HEK293 (cell line): ENCODE measurements at regions of chr1 and their contacts with region 1.

Region 1: DNA sequence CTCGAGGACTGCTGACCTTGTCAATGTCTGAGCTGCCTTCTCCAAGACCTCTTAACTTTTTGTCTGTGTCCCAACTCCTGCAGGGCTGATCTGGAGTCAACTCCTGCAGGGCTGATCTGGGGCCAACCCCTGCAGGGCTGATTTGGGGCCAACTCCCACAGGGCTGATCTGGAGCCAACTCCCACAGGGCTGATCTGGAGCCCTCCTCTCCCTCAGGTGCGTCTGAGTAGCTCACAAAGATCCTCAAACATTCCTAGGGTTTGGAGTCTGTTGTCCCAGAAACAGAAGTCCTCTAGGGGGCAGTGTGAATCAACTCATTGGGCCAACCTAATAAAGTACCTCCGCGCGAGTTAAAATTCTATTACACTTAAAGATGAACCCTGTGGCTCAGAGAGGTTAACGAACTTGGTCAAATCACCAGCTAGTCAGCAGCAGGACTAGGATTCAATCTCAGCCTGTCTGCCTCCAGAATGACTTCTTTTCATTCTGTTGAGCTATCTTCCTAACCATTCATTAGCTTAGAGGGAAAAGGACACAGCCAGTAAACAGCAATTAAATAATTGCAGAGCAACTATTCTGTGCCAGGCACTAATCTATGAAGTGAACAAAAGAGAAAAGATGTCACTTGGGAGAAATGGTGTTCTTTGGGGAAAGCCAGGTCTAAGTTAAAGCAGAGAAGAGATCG is 17.2 kb upstream of the RLF start:
- H3K4me3 ChIP-seq: no peak overlapping the region
- H3K27ac ChIP-seq: no peak overlapping the region
- H3K4me1 ChIP-seq: no peaks in the 10 kb centered on the region
- CTCF ChIP-seq: no peak; the same call in 1 of the 2 replicates

Region 2: GRCh38 chr1:40132383-40133311 is 11.4 kb before region 1 on chr1:
- CTCF ChIA-PET with region 1: interaction called, 10 read pairs
- POLR2A ChIA-PET with region 1: no interaction called
- H3K4me3 ChIP-seq: no peak overlapping the region
- H3K27ac ChIP-seq: no peak overlapping the region
- H3K4me1 ChIP-seq: no peaks in the 10 kb centered on the region
- CTCF ChIP-seq: no peak

Region 3: DNA sequence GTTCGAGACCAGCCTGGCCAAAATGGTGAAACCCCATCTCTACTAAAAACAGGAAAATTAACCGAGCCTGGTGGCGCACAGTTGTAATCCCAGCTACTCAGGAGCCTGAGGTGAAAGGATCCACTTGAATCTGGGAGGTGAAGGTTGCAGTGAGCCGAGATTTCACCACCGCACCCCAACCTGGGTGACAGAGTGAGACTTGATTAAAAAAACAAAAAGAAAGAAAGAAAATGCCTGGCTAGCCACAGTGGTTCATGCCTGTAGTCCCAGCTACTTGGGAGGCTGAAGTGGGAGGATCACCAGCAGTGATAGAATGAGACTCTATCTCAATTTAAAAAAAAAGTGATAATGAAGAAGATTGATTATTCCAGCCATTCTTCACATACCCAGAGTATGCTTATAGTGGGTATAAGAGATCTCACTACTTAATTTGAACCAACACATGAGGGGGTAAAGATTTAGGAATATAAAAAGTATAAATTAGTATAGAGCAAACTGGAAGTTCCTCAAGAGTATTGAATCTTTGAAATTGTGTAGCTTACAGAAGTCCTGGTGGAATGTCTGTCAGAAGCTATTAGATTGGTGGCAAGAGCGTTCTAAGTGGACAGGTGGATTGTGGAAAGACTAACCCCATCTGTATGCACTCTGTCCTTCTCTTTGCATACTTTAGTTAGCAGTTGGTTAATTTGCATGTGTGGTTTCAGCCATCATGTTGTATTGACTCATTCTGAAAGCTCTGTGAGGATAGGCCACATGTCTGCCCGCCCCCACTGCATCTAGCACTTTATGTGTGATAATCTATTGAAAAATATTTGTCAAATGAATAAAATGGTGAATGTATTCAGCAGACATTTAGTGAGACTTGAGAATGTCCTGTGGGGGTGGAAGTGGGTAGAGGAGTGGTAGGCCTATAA is 42.2 kb after region 1 on chr1:
- CTCF ChIA-PET with region 1: interaction called, 49 read pairs
- POLR2A ChIA-PET with region 1: no interaction called
- H3K4me3 ChIP-seq: no peak overlapping the region
- H3K27ac ChIP-seq: no peak overlapping the region
- H3K4me1 ChIP-seq: no peaks in the 10 kb centered on the region
- CTCF ChIP-seq: no peak

Region 4: DNA sequence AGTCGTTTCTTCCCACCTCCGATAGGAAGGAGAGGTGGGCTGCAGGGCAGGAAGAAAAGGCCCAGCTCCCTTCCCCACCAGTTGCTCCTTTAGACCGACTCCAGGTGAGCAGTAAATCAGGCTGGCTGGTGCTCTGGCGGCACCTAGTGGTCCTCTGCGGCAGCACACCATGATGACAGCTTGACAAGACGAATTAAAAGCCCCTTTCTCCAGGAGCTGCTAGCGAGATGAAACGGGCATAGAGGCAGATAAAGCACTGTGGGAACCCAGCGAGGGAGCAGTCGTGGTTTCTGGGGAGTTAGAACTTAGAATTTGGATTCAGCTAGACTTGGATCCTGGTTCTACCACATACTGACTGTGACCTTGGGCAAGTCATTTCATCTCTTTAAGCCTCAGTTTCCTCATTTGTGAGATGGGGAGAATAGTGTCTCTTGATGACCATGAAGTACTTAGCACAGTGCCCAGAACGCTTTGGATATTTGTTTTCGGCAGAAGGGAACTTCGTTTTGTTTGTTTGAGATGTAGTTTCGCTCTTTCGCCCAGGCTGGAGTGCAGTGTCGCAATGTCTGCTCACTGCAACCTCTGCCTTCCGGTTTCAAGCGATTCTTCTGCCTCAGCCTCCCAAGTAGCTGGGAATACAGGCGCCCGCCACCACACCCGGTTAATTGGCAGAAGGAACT is 194.9 kb after region 1 on chr1:
- CTCF ChIA-PET with region 1: interaction called, 85 read pairs
- POLR2A ChIA-PET with region 1: interaction called, 4 read pairs
- H3K4me3 ChIP-seq: no peak overlapping the region
- H3K27ac ChIP-seq: no peak overlapping the region
- H3K4me1 ChIP-seq: no peaks in the 10 kb centered on the region
- CTCF ChIP-seq: peak; percentile 91

Region 5: DNA sequence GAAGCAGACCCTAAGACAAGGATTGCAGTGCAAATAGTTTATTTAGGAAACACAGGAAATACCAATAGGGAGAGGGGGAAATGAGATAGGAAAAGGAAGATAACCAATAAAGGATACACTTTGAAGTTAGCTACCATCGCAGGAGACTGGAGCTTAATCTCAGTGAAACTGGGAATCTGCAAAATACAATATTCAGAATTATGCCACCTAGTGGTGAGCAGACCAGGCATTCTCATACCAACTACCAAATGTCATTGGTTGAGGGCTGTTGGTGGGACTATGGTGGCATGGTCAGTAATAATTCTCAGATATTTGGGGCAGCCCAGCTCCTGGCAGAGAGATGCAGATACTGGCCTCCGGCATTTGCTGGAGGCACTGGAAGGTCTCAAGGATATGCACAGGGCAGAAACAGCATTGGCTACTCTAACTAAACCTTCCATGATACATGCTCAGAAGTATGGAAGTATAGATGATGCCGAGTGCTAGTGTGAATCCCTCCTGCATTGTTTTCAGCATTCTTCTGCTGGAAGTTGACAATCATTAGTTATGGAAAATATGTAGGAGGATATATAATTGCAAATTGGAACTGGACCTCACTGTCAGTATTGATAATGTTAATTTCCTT is 294.5 kb after region 1 on chr1:
- CTCF ChIA-PET with region 1: interaction called, 12 read pairs
- POLR2A ChIA-PET with region 1: no interaction called
- H3K4me3 ChIP-seq: no peak overlapping the region
- H3K27ac ChIP-seq: no peak overlapping the region
- H3K4me1 ChIP-seq: no peaks in the 10 kb centered on the region
- CTCF ChIP-seq: no peak